Caco-2 (cell line): ENCODE measurements at regions of chr10 and their contacts with region 1.

Region 1: GRCh38 chr10:31490858-31491504 is 172.0 kb downstream of the ZEB1 start:
- DNase-seq: peak in 1 of 2 experiments; percentile 32
- H3K4me3 ChIP-seq: no peak overlapping the region
- H3K4me3 Mint-ChIP-seq: no peak overlapping the region
- H3K27ac Mint-ChIP-seq: no peak overlapping the region
- H3K4me1 ChIP-seq: no peaks in the 10 kb centered on the region
- H3K4me1 Mint-ChIP-seq: no peaks in the 10 kb centered on the region
- H3K27me3 ChIP-seq: no peaks in the 10 kb centered on the region
- H3K27me3 Mint-ChIP-seq: peaks cover 5% of the 10 kb centered on the region
- CTCF ChIP-seq: peak; percentile 56 to 72

Region 2: GRCh38 chr10:30687698-30688219 is 803.2 kb before region 1 on chr10:
- CTCF ChIA-PET with region 1: no interaction called
- POLR2A ChIA-PET with region 1: no interaction called
- intact Hi-C with region 1: loop called (anchors 1 kb)
- DNase-seq: peak; percentile 82 to 92
- H3K4me3 ChIP-seq: no peak overlapping the region
- H3K4me3 Mint-ChIP-seq: no peak overlapping the region
- H3K27ac Mint-ChIP-seq: no peak overlapping the region
- H3K4me1 ChIP-seq: no peaks in the 10 kb centered on the region; the same call in 1 of the 2 replicates
- H3K4me1 Mint-ChIP-seq: no peaks in the 10 kb centered on the region
- H3K27me3 ChIP-seq: no peaks in the 10 kb centered on the region; the same call in 1 of the 2 replicates
- H3K27me3 Mint-ChIP-seq: peaks cover 28% of the 10 kb centered on the region
- CTCF ChIP-seq: peak; percentile 90 to 98

Region 3: GRCh38 chr10:30751678-30752331 is 739.2 kb before region 1 on chr10:
- CTCF ChIA-PET with region 1: interaction called, 12 read pairs
- POLR2A ChIA-PET with region 1: no interaction called
- intact Hi-C with region 1: no loop called
- DNase-seq: peak; percentile 64 to 76
- H3K4me3 ChIP-seq: no peak overlapping the region
- H3K4me3 Mint-ChIP-seq: no peak overlapping the region
- H3K27ac Mint-ChIP-seq: no peak overlapping the region
- H3K4me1 ChIP-seq: no peaks in the 10 kb centered on the region
- H3K4me1 Mint-ChIP-seq: no peaks in the 10 kb centered on the region
- H3K27me3 ChIP-seq: no peaks in the 10 kb centered on the region; the same call in 1 of the 2 replicates
- H3K27me3 Mint-ChIP-seq: peaks cover 24% of the 10 kb centered on the region
- CTCF ChIP-seq: peak; percentile 54 to 93

Region 4: DNA sequence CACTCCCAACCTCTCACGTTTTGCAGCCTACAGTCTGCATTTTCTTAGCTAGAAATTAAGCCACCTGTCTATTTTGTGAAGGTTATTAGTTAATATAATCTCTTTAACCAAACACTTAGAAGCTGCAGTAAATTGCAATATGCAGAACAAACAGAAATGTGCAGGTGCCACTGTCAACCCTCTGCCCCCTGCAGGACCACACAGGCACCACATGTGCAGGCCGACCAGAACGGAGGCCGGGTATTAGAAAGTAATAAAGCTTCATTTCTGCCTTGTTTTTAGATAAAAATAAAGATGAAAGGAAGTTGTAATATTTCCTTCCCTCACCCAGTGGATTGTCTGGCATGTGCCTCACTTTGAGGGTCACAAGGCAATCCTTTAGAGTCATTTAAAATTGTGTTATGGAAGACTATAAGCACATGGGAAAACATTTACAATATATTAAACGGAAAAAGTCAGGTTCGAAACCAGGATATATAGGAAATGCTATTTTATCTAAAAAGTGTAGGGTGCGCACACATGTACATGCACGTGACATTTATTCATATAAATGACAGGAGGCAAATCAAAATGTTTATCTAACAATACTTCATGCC is 279.4 kb after region 1 on chr10:
- CTCF ChIA-PET with region 1: no interaction called
- POLR2A ChIA-PET with region 1: no interaction called
- intact Hi-C with region 1: loop called (anchors 1 kb)
- DNase-seq: peak in 1 of 2 experiments; percentile 68
- H3K4me3 ChIP-seq: no peak overlapping the region
- H3K4me3 Mint-ChIP-seq: no peak overlapping the region
- H3K27ac Mint-ChIP-seq: no peak overlapping the region
- H3K4me1 ChIP-seq: no peaks in the 10 kb centered on the region
- H3K4me1 Mint-ChIP-seq: no peaks in the 10 kb centered on the region
- H3K27me3 ChIP-seq: no peaks in the 10 kb centered on the region
- H3K27me3 Mint-ChIP-seq: no peaks in the 10 kb centered on the region
- CTCF ChIP-seq: peak; percentile 79 to 94

Region 5: DNA sequence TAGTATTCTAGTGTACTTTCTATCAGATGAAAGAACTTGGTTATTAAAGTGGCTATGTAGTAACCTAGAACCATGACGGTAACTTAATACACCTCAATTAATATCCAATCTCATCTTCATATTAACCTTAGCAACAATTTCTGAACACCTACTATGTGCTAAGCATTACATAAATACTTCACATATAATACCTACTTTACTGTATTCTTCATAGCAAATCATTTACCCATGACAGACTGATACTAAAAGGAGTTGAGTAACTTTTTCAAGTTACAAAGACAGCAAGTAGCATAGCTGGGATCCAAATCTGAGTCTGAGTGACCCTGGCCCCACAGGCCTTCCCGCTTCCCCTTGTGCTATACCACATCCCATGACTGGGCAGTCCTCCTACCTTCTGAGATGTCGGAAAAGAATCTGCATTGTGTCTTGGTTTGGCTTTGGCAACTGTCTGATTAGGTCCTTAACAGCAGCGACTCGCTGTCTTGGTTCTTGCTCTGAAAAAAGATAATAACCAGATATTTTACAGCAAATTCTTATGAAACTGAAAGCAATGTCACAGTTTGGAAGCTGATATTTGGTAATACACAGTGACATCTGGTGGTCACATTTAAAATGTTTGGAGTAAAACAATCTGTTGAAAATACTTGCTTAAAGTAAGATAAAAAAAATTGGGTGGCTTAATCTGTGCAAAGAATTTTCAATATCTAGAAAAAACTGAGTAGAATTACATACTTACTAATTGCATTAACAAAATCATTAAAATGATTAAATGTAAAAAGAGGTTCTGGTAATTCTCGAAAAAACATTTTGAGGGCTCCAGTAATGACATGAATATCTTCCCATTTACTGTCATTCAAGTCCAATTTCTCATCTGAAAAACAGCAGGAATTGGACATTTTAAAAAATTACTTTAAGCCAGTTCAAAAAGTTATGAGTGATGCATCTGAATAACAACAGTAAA is 317.6 kb after region 1 on chr10:
- CTCF ChIA-PET with region 1: no interaction called
- POLR2A ChIA-PET with region 1: no interaction called
- intact Hi-C with region 1: loop called (anchors 5 kb)
- DNase-seq: peak in 1 of 2 experiments; percentile 42
- H3K4me3 ChIP-seq: no peak overlapping the region
- H3K4me3 Mint-ChIP-seq: no peak overlapping the region
- H3K27ac Mint-ChIP-seq: no peak overlapping the region
- H3K4me1 ChIP-seq: no peaks in the 10 kb centered on the region
- H3K4me1 Mint-ChIP-seq: no peaks in the 10 kb centered on the region
- H3K27me3 ChIP-seq: no peaks in the 10 kb centered on the region
- H3K27me3 Mint-ChIP-seq: no peaks in the 10 kb centered on the region
- CTCF ChIP-seq: peak; percentile 52 to 69